GM10248 (cell line): ENCODE measurements at regions of chr1 and their contacts with region 1.

Region 1: GRCh38 chr1:110535985-110536384 is 17.0 kb upstream of the KCNA10 start:
- DNase-seq: no peak
- CTCF ChIP-seq: no peak

Region 2: GRCh38 chr1:110188035-110188618 is 347.9 kb before region 1 on chr1:
- CTCF ChIA-PET with region 1: no interaction called
- POLR2A ChIA-PET with region 1: no interaction called
- DNase-seq: no peak
- CTCF ChIP-seq: no peak

Region 3: GRCh38 chr1:110524311-110525251 is 11.4 kb before region 1 on chr1:
- CTCF ChIA-PET with region 1: interaction called, 19 read pairs
- POLR2A ChIA-PET with region 1: no interaction called
- DNase-seq: peak; percentile 72
- CTCF ChIP-seq: peak; percentile 63

Region 4: DNA sequence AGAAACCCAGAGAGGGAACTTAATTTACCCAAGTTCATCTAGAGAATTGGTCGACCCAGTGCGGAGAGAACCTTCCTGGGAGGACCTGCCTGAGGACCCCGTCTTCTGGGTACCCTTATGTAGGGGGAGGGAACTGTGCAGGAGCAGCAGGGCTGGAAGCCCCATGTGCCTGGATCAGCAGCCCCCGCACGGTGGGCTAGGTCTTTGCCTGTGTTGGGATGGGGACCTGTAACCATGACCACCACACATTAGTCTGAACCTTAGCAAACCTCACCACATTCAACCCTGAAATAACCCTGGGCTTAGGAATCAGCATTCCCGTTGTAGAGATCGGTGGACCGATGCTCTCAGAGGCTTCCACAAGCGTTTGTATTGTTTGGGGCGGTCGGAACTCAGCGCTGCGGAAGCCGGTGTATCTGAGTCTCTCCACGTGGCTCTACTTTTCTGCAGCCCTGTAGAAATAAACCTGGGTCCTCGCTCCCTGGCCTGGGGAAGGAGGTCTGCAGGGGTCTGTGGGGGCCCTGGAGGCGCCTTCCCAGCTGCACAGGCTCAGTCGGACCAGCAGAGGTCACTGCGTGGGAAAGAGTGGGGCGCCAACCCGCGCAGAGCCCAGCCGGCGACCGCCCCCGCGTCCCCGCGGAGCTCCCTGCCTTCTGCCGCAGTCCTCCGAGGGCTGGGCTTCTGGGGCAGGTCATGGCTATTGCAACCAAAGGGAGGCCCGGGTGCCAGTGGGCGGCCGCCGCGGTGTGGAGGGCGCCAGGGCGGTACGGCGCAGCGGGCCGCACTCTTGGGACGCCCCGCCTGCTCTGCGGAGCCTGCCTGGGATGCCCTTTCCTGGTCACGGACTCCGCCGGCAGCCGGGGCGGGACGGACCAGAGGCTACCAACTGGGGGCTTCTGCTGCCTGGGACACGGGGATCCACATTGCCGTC is 19.2 kb after region 1 on chr1:
- CTCF ChIA-PET with region 1: interaction called, 15 read pairs
- POLR2A ChIA-PET with region 1: no interaction called
- DNase-seq: peak; percentile 78
- CTCF ChIP-seq: peak; percentile 63